ENCODE measurements at regions of chr12 and their contacts with region 1.

Region 1: DNA sequence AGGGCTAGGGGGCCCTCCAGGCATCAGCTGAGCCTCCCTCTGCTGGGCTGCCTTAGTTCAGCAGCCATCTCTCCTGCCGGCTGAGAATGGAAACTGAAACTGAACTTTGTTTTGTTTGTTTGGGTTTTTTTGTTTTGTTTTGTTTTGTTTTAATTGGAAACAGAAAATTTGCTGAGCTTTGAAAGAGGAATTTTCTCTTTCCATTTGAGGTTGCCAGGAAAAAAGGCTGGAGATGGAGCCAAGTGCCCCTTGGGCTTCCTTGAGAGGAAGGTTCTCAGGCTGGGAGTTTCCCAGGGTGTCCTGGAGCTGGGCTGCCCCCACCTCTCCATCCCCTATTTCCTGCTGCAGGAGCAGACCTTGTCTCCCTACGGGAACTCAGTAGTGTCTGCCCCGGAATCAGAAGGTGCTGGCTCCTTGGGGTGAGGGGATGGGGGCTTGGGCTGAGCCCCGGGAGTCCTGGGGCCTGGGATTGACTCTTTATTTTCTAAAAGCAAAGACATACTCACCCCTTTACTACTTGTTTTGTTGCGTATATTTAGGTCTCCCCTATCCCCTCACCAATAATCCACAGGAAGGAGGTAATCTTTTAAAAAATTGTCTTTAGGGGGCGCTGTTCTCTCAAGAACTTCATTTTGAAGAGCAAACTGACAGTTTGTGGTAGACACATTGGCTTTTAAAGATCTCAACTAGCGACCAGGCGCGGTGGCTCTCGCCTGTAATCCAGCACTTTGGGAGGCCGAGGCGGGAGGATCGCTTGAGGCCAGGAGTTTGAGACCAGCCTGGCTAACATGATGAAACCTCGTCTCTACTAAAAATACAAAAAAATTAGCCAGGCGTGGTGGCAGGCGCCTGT is 21.3 kb upstream of the OASL start:
- DNase-seq: peak; percentile 81
- CTCF ChIP-seq: peak; percentile 61

Region 2: GRCh38 chr12:121072147-121072546 is 11.8 kb after region 1 on chr12:
- CTCF ChIA-PET with region 1: interaction called, 13 read pairs
- POLR2A ChIA-PET with region 1: no interaction called
- DNase-seq: no peak
- CTCF ChIP-seq: no peak

Region 3: GRCh38 chr12:121093487-121093891 is 33.1 kb after region 1 on chr12:
- CTCF ChIA-PET with region 1: interaction called, 25 read pairs
- POLR2A ChIA-PET with region 1: interaction called, 3 read pairs
- DNase-seq: no peak
- CTCF ChIP-seq: no peak

Region 4: GRCh38 chr12:121110211-121110940 is 50.0 kb after region 1 on chr12:
- CTCF ChIA-PET with region 1: interaction called, 19 read pairs
- POLR2A ChIA-PET with region 1: no interaction called
- DNase-seq: peak; percentile 76
- CTCF ChIP-seq: peak; percentile 96

Region 5: DNA sequence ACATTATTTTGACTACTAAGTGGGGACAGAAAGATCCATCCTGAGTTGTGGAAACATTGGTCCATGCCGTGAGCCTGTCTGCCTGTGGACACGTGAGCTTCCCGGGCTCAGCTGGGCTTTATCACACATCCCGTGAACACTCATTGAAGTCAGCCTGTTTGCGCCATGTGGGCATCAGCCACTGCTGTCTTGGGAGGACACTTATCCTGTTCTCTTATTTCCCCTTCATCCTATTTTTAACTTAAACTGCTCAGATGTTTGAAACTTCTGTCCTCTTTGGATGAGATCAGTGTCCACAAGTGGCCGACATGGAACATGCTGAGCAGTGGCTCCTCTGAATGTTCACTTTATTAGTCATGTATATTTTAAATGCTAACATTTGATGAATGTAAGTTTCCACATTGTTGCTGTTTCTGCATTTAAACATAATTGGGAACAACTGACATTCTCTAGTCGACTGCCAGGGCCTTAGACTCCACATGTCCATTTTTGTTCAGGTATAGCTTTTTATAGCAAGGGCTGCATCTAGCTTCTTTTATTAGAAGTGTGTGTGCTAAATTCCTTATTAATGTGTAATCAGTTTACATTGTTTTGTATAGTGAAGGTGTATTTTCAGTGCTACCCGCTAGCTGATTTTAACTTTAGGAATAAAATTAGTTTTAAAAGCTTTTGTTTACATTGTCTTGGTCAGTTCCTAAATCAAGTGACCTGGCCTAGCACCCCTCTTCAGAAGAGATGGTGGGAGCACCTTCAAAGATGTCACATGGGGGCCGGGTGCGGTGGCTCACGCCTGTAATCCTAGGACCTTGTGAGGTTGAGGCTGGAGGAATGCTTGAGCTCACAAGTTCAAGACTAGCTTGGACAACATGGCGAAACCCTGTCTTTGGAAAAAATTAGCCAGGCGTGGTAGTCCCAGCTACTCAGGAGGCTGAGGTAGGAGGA is 363.6 kb after region 1 on chr12:
- CTCF ChIA-PET with region 1: no interaction called
- POLR2A ChIA-PET with region 1: interaction called, 11 read pairs
- DNase-seq: no peak
- CTCF ChIP-seq: no peak

Measured in GM10248 (cell line).